Naive thymus-derived CD4-positive, alpha-beta T cell (primary cell): ENCODE measurements at regions of chr13 and their contacts with region 1.

Region 1: GRCh38 chr13:27826379-27827353 is 34.4 kb downstream of the GSX1 start:
- DNase-seq: peak; percentile 29 to 70 (median 53)
- ATAC-seq: peak; percentile 67
- H3K4me3 ChIP-seq: no peak overlapping the region
- H3K4me3 Mint-ChIP-seq: peak overlapping the region in 3 of 10 donors; percentile 22 to 34 (median 29)
- H3K27ac ChIP-seq: no peak overlapping the region
- H3K27ac Mint-ChIP-seq: no peak overlapping the region
- H3K4me1 ChIP-seq: peaks cover 0 to 3% of the 10 kb centered on the region in 2 donors
- H3K4me1 Mint-ChIP-seq: peaks cover 0 to 15% (median 3%) of the 10 kb centered on the region in 7 donors
- H3K27me3 ChIP-seq: peaks cover 3 to 12% of the 10 kb centered on the region in 2 donors
- H3K27me3 Mint-ChIP-seq: peaks cover 73 to 91% (median 75%) of the 10 kb centered on the region in 5 donors

Region 2: GRCh38 chr13:27362064-27362883 is 464.4 kb before region 1 on chr13:
- CTCF ChIA-PET with region 1: interaction called, 32 read pairs
- POLR2A ChIA-PET with region 1: no interaction called
- intact Hi-C with region 1: loop called (anchors 1 kb)
- DNase-seq: peak; percentile 51 to 82 (median 66)
- ATAC-seq: peak; percentile 95
- H3K4me3 ChIP-seq: peak overlapping the region; percentile 47
- H3K4me3 Mint-ChIP-seq: peak overlapping the region; percentile 24 to 83 (median 45)
- H3K27ac ChIP-seq: no peak overlapping the region
- H3K27ac Mint-ChIP-seq: peak overlapping the region in 1 of 9 donors; percentile 35
- H3K4me1 ChIP-seq: peaks cover 0 to 4% of the 10 kb centered on the region in 2 donors
- H3K4me1 Mint-ChIP-seq: peaks cover 0 to 9% (median 5%) of the 10 kb centered on the region in 7 donors
- H3K27me3 ChIP-seq: peaks cover 0 to 7% of the 10 kb centered on the region in 2 donors
- H3K27me3 Mint-ChIP-seq: peaks cover 13 to 50% (median 25%) of the 10 kb centered on the region in 5 donors

Region 3: GRCh38 chr13:27406178-27406939 is 420.3 kb before region 1 on chr13:
- CTCF ChIA-PET with region 1: interaction called, 10 read pairs
- POLR2A ChIA-PET with region 1: no interaction called
- intact Hi-C with region 1: loop called in 1 of 2 experiments (anchors 1 kb)
- DNase-seq: peak in 7 of 9 donors; percentile 25 to 57 (median 48)
- ATAC-seq: peak; percentile 71
- H3K4me3 ChIP-seq: no peak overlapping the region
- H3K4me3 Mint-ChIP-seq: no peak overlapping the region
- H3K27ac ChIP-seq: no peak overlapping the region
- H3K27ac Mint-ChIP-seq: no peak overlapping the region
- H3K4me1 ChIP-seq: no peaks in the 10 kb centered on the region
- H3K4me1 Mint-ChIP-seq: peaks cover 0 to 6% (median 0%) of the 10 kb centered on the region in 7 donors
- H3K27me3 ChIP-seq: no peaks in the 10 kb centered on the region
- H3K27me3 Mint-ChIP-seq: peaks cover 0 to 37% (median 9%) of the 10 kb centered on the region in 5 donors

Region 4: GRCh38 chr13:27556109-27556508 is 270.6 kb before region 1 on chr13:
- CTCF ChIA-PET with region 1: interaction called, 4 read pairs
- POLR2A ChIA-PET with region 1: no interaction called
- intact Hi-C with region 1: loop called in 1 of 2 experiments (anchors 1 kb)
- DNase-seq: no peak
- ATAC-seq: no peak
- H3K4me3 ChIP-seq: no peak overlapping the region
- H3K4me3 Mint-ChIP-seq: no peak overlapping the region
- H3K27ac ChIP-seq: no peak overlapping the region
- H3K27ac Mint-ChIP-seq: no peak overlapping the region
- H3K4me1 ChIP-seq: no peaks in the 10 kb centered on the region
- H3K4me1 Mint-ChIP-seq: peaks cover 0 to 8% (median under 1%) of the 10 kb centered on the region in 7 donors
- H3K27me3 ChIP-seq: no peaks in the 10 kb centered on the region
- H3K27me3 Mint-ChIP-seq: no peaks in the 10 kb centered on the region

Region 5: DNA sequence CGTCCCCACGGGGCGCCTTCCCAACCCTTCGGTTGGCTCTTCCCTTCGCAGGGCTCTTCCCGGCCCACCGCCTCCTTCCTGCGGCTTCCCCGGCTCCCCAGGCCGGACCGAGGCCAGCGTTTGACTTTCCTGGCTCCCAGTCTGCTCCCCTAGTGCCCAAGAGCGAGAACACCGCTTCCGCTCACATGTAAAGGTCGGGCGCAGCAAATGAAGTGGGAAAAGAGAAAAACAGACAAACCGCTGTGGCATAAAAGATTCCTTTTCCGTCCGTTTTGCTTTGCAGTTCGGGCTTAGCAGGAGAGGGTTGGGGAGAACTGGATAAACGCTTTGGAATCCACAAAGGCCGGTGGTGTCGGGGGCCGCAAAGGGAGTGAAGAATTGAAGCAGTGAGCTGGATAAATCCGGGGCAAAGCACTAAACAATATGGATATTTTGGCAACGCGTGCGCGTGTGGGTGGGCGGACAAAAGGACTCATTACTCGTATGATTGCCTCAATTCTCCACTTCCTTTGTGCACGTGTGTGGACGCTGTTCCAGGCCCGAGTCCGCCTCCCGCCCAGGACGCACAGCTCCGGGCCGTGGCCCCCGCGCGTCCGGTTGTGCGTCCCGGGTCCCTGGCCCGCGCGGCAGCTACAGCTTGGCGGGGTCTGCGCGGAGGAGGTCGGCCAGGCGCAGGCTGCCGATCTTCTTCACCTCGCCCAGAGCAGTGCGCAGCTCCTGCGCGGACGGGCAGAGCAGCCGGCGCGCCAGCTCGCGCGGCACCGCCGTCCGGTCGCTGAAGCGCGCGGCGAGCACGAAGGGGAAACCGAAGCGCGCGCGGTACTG is 151.0 kb after region 1 on chr13:
- CTCF ChIA-PET with region 1: interaction called, 14 read pairs
- POLR2A ChIA-PET with region 1: interaction called, 6 read pairs
- intact Hi-C with region 1: no loop called
- DNase-seq: no peak
- ATAC-seq: no peak
- H3K4me3 ChIP-seq: no peak overlapping the region
- H3K4me3 Mint-ChIP-seq: peak overlapping the region in 5 of 10 donors; percentile 9 to 54 (median 12)
- H3K27ac ChIP-seq: no peak overlapping the region
- H3K27ac Mint-ChIP-seq: peak overlapping the region in 1 of 9 donors; percentile 71
- H3K4me1 ChIP-seq: no peaks in the 10 kb centered on the region
- H3K4me1 Mint-ChIP-seq: peaks cover 10 to 33% (median 25%) of the 10 kb centered on the region in 7 donors
- H3K27me3 ChIP-seq: peaks cover 10 to 20% of the 10 kb centered on the region in 2 donors
- H3K27me3 Mint-ChIP-seq: peaks cover 81 to 92% (median 88%) of the 10 kb centered on the region in 5 donors